ENCODE measurements at regions of chr1 and their contacts with region 1.

Region 1: GRCh38 chr1:68221621-68222373 is 10.5 kb downstream of the WLS start:
- DNase-seq: no peak
- H3K4me3 ChIP-seq: no peak overlapping the region
- CTCF ChIP-seq: no peak

Region 2: DNA sequence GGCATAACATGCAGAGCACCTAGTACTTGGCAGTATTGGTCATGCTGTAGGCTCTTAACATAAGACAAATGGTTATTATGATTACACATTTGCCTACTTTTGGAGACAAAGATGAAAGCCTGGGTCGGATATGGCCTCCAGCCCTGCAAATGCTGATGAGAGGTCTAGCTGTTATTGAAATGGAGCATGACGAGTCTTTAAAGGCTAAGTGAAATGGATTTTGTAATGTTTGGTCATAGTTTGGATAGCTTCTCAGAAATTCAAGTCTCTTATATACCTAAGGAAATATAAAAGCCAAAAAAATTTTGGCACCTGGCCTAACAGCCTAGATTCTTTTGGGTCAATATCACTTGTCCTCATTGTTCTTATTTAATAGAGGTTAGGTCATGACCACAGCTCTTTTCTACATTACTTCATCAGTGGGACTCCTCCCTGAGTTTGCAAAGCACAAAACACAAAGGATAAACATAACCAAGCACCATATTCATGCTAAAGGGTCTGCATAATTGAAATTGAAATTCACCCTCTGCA is 79.7 kb after region 1 on chr1:
- in situ Hi-C with region 1: loop called (anchors 5 kb)
- DNase-seq: peak; percentile 63
- H3K4me3 ChIP-seq: no peak overlapping the region
- CTCF ChIP-seq: no peak

Measured in astrocyte of the cerebellum (primary cell).